ENCODE measurements at regions of chr18 and their contacts with region 1.

Region 1: DNA sequence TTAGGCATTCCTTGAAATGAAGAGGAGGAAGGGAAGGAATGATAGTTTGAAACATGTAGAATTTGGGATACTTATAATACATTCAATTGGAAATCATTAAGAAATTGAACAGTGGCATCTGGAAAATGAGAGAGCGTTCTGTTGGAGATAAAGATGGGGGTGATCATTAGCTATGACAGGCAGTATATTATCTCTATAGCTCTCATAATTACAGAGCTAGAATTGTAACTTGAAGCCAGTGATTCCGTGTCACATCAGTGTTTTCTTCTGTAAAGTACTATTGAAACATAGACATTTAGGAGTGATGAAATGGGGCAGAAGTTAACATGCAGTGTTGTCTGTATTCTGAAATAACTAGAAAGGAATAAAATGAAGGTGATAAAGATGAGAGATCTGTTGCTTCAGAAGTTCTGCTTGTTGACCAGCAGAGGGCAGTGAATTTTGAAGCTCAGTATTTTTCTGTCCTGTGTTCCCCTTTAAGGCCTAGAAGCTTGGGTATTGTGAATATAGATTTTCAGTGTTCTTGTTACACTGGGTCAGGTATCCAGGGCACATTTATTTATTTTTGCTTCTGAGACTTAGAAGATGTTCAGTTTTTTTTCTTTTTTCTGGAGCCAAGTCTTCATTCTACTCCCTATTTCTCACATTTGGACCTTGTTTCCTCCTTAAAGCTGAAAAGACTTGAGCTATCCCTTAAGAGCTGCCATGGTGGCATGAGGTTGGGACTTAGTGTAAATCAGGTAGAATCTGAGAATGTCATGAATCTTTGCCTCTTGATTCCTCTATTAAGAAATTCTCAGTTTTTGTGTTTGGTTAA is 157.4 kb downstream of the TAF4B start:
- DNase-seq: no peak
- ATAC-seq: peak in 1 of 2 donors; percentile 86
- H3K4me3 ChIP-seq: no peak overlapping the region
- H3K27ac ChIP-seq: no peak overlapping the region
- H3K4me1 ChIP-seq: no peaks in the 10 kb centered on the region
- H3K27me3 ChIP-seq: no peaks in the 10 kb centered on the region
- CTCF ChIP-seq: peak in 4 of 5 experiments; percentile 50 to 74 (median 61)
- POLR2A ChIP-seq: no peak

Region 2: GRCh38 chr18:26286008-26286407 is 97.7 kb before region 1 on chr18:
- in situ Hi-C with region 1: loop called in 1 of 4 experiments (anchors 25 kb)
- intact Hi-C with region 1: no loop called
- DNase-seq: no peak
- ATAC-seq: no peak
- H3K4me3 ChIP-seq: no peak overlapping the region
- H3K27ac ChIP-seq: no peak overlapping the region
- H3K4me1 ChIP-seq: no peaks in the 10 kb centered on the region
- H3K27me3 ChIP-seq: no peaks in the 10 kb centered on the region
- CTCF ChIP-seq: no peak
- POLR2A ChIP-seq: no peak

Region 3: DNA sequence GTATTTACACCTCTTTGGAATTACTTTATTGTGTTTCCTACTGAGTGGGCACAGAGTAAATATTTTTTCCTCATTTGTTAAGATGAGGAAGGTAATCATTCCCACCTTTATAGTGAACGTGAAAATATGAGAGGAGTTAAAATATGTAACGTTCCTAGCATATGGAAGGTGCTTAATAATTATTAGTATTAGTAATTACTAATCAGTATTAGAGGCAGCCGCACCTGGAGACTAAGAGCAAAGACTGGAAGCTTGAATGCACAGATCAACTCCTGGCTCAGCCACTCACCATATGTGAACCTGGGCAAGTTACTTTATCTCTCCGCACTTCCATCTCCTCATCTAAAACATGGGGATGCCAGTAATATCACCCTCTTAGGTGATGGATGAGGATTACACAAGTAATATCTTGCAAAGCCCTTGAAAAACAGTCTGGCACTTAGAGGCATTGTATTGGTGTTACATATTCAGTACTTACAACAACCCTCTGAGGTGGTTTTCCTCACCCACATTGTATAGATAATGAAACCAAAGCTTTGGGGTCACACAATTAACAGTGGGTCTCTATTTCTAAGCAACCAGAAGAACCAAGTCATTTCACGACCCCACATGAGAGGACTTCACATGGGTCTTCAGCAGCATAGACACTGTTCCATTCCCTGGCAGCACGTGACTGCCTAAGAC is 265.0 kb after region 1 on chr18:
- in situ Hi-C with region 1: loop called in 1 of 4 experiments (anchors 10 kb)
- intact Hi-C with region 1: loop called (anchors 5 kb)
- DNase-seq: no peak
- ATAC-seq: no peak
- H3K4me3 ChIP-seq: no peak overlapping the region
- H3K27ac ChIP-seq: no peak overlapping the region
- H3K4me1 ChIP-seq: no peaks in the 10 kb centered on the region
- H3K27me3 ChIP-seq: peaks cover 0 to 6% (median 5%) of the 10 kb centered on the region in 3 donors
- CTCF ChIP-seq: no peak
- POLR2A ChIP-seq: no peak